Ascending aorta (tissue), 2 donors: ENCODE measurements at regions of chrX and their contacts with region 1.

Region 1: GRCh38 chrX:16123222-16123786 is at the start of gene GRPR:
- DNase-seq: peak in 1 of 2 donors; percentile 82
- H3K4me3 ChIP-seq: no peak within 1 kb of the TSS
- H3K27ac ChIP-seq: no peak within 1 kb of the TSS
- H3K4me1 ChIP-seq: no peaks in the 10 kb centered on the region
- H3K27me3 ChIP-seq: no peaks in the 10 kb centered on the region
- CTCF ChIP-seq: peak; percentile 21 to 62 (median 55)
- total RNA-seq, gene GRPR: 1.7 TPM

Region 2: GRCh38 chrX:15888062-15888461 is 235.2 kb before region 1 on chrX:
- intact Hi-C with region 1: no loop called
- DNase-seq: no peak
- H3K4me3 ChIP-seq: no peak overlapping the region
- H3K27ac ChIP-seq: no peak overlapping the region
- H3K4me1 ChIP-seq: no peaks in the 10 kb centered on the region
- H3K27me3 ChIP-seq: no peaks in the 10 kb centered on the region
- CTCF ChIP-seq: no peak

Region 3: GRCh38 chrX:15956676-15957075 is 166.6 kb before region 1 on chrX:
- intact Hi-C with region 1: no loop called
- DNase-seq: no peak
- H3K4me3 ChIP-seq: no peak overlapping the region
- H3K27ac ChIP-seq: no peak overlapping the region
- H3K4me1 ChIP-seq: no peaks in the 10 kb centered on the region
- H3K27me3 ChIP-seq: no peaks in the 10 kb centered on the region
- CTCF ChIP-seq: no peak

Region 4: GRCh38 chrX:16666541-16666940 is 543.2 kb after region 1 on chrX:
- intact Hi-C with region 1: loop called (anchors 10 kb)
- DNase-seq: no peak
- H3K4me3 ChIP-seq: no peak overlapping the region
- H3K27ac ChIP-seq: no peak overlapping the region
- H3K4me1 ChIP-seq: no peaks in the 10 kb centered on the region
- H3K27me3 ChIP-seq: no peaks in the 10 kb centered on the region
- CTCF ChIP-seq: no peak